Activated CD4-positive, alpha-beta memory T cell treated with anti-CD3 and anti-CD28 coated beads for 36 hours (primary cell): ENCODE measurements at regions of chr1 and their contacts with region 1.

Region 1: DNA sequence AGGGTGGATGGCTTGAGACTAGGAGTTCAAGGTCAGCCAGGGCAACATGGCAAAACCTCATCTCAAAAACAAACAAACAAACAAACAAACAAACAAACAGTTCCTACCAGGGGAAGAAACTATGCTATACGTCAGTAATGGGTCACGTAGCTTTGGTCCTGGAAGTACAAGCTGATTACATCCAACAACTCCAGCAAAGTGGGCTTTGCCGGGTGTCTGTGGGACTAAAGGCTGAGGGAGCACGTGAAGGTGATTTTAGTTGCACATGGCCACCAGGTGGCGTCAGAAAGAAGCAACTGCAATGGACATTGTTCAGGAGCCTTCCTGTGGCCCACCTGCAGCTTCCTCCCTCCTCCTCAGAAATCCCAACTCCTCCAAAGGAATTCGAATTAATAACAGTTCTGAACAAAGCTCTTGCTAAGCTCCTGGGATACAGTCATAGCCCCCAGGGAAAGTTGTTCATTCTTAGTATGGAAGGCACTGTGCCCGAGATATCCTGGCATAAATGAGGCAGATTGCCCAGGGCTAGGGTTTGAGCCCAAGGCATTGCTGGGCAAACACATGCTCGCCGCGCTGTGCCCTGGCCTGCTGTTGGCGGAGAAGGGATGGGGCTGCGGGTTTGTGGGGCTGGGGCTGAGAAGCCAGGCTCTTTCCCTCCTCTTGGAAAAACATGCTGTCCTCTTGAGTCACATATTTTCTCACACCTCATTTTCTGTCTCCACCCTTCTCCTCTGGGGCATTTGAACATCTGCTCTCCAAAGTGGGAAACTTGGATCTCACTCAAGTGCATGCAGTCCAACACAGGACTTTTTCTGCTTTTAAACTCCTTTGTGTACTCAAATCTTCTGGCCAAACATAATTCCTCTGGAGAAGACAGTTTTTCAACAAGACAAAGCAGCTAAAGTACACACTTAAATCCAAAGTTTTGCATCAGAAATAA is 28.6 kb downstream of the AKNAD1 start:
- DNase-seq: peak; percentile 81
- H3K4me3 Mint-ChIP-seq: no peak overlapping the region
- H3K27ac Mint-ChIP-seq: no peak overlapping the region
- H3K4me1 Mint-ChIP-seq: no peaks in the 10 kb centered on the region
- H3K27me3 Mint-ChIP-seq: no peaks in the 10 kb centered on the region

Region 2: GRCh38 chr1:108816049-108816893 is 12.0 kb before region 1 on chr1:
- CTCF ChIA-PET with region 1: interaction called, 20 read pairs
- POLR2A ChIA-PET with region 1: no interaction called
- intact Hi-C with region 1: no loop called
- DNase-seq: no peak
- H3K4me3 Mint-ChIP-seq: no peak overlapping the region
- H3K27ac Mint-ChIP-seq: no peak overlapping the region
- H3K4me1 Mint-ChIP-seq: no peaks in the 10 kb centered on the region
- H3K27me3 Mint-ChIP-seq: no peaks in the 10 kb centered on the region

Region 3: DNA sequence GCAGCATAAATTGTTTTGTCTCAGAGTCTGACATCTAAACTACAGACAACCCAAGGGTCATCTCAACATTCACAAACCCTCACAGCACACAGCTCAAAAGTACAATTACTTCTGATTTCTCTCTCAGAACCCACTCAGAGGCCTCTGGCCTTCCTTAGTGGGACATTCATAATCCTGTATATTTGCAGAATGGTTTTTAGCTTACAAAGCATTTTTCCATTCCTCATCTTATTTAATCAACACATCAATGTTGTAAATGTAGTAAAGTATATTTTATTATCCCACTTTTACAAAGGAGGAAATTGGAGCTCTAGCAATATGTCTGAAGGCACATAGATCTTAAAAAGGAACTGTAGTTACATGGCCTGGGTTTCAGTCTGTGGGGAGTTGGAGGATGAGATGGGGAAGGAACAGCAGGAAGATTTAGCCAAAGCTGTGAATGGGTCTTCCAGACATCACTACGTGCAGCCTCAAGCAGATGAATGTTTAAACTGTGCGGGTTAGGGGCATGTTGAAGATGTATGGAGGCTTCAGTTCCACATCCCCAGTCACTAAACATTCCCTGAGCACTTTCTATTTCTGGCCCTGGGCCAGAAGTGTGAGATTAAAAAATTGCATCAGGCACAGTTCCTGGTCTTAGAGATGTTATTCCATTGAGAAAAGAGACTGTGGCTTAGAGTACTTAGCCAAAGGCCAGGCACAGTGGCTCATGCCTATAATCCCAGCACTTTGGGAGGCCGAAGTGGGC is 15.3 kb after region 1 on chr1:
- CTCF ChIA-PET with region 1: interaction called, 12 read pairs
- POLR2A ChIA-PET with region 1: no interaction called
- intact Hi-C with region 1: no loop called
- DNase-seq: no peak
- H3K4me3 Mint-ChIP-seq: no peak overlapping the region
- H3K27ac Mint-ChIP-seq: no peak overlapping the region
- H3K4me1 Mint-ChIP-seq: no peaks in the 10 kb centered on the region
- H3K27me3 Mint-ChIP-seq: no peaks in the 10 kb centered on the region

Region 4: GRCh38 chr1:108886292-108886691 is 58.0 kb after region 1 on chr1:
- CTCF ChIA-PET with region 1: interaction called, 27 read pairs
- POLR2A ChIA-PET with region 1: no interaction called
- intact Hi-C with region 1: no loop called
- DNase-seq: no peak
- H3K4me3 Mint-ChIP-seq: no peak overlapping the region
- H3K27ac Mint-ChIP-seq: no peak overlapping the region
- H3K4me1 Mint-ChIP-seq: no peaks in the 10 kb centered on the region
- H3K27me3 Mint-ChIP-seq: no peaks in the 10 kb centered on the region

Region 5: DNA sequence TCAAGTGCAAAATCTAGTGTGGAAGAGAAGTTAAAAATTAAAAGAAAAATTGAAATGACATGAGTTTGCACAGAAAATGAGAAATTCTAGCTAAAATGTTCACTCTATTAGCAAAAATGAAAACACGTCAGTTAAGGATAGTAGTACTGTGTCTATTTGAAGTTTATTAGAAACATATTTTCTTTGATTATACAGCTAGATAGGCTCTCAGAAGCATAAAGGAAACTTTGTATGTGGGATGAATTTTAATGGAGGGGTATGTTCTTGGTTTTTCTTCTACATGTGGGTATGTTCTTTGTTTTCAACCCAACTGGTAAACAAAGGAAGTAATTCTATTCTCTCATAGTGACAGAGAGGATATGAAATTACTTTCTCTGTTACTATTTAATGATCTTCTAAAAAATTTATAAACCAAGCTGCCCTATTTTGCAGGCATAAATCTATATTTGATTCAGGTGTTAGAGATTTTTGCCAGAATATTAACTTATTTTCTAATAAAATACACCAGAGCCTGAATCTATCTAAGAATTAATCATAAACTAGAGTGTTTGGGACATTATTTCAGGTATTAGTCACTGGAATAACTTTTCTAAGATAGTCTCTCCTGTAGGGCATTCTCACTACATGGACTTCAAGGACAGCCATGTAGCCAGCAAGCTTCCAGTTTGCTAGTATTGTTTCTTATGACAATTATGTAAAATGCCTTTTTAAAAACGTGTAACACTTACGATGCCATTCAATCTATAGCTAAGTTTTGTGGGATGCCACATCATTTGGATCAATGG is 64.3 kb after region 1 on chr1:
- CTCF ChIA-PET with region 1: interaction called, 215 read pairs
- POLR2A ChIA-PET with region 1: no interaction called
- intact Hi-C with region 1: no loop called
- DNase-seq: no peak
- H3K4me3 Mint-ChIP-seq: no peak overlapping the region
- H3K27ac Mint-ChIP-seq: no peak overlapping the region
- H3K4me1 Mint-ChIP-seq: no peaks in the 10 kb centered on the region
- H3K27me3 Mint-ChIP-seq: no peaks in the 10 kb centered on the region

Region 6: GRCh38 chr1:108897865-108898720 is 69.8 kb after region 1 on chr1:
- CTCF ChIA-PET with region 1: interaction called, 215 read pairs
- POLR2A ChIA-PET with region 1: no interaction called
- intact Hi-C with region 1: loop called (anchors 1 kb)
- DNase-seq: no peak
- H3K4me3 Mint-ChIP-seq: no peak overlapping the region
- H3K27ac Mint-ChIP-seq: no peak overlapping the region
- H3K4me1 Mint-ChIP-seq: no peaks in the 10 kb centered on the region
- H3K27me3 Mint-ChIP-seq: no peaks in the 10 kb centered on the region